GM10248 (cell line): ENCODE measurements at regions of chr5 and their contacts with region 1.

Region 1: DNA sequence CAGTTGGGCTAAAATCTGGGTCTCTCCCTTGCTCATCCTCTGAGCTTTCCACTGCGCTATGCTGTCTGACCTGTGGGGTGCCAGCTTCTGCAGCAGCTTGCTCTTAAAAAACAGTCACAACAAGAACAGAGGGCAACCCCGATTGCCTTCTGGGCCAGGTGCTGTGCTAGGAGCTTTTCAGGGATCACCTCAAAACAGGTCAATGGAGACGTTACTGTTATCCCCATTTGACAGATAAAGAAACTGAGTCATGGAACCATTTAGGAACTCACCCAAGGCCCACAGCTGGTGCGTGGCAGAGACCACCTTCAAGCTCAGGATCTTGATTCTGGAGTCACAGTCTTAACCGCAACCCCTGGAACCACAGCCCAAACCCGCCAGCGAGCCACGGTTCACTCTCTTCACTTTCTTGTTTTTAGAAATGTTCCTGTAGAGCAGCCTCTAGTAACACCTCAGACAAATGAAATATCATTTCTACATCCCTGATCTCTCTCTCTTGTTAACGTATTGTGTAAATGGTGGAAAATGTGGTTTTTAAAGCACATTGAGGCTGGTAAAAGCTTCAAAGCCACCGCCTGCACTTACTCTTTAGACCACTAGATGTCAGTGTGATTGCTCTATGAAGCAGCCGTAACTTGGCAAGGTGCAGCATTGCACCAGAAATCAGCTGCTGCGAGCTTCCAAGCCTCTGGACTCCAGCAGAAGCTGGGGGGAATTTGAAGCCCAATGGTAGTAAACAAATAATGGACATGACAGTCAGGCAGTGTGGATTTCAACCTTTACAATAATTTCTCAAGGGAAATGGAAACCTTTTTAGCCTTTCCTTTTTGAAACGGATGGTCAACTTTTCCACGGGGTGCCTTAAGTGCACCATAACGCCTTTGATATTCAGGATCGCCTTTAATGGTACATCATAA is 1.7 kb downstream of the FYB1 start:
- DNase-seq: peak; percentile 65
- CTCF ChIP-seq: peak; percentile 95

Region 2: DNA sequence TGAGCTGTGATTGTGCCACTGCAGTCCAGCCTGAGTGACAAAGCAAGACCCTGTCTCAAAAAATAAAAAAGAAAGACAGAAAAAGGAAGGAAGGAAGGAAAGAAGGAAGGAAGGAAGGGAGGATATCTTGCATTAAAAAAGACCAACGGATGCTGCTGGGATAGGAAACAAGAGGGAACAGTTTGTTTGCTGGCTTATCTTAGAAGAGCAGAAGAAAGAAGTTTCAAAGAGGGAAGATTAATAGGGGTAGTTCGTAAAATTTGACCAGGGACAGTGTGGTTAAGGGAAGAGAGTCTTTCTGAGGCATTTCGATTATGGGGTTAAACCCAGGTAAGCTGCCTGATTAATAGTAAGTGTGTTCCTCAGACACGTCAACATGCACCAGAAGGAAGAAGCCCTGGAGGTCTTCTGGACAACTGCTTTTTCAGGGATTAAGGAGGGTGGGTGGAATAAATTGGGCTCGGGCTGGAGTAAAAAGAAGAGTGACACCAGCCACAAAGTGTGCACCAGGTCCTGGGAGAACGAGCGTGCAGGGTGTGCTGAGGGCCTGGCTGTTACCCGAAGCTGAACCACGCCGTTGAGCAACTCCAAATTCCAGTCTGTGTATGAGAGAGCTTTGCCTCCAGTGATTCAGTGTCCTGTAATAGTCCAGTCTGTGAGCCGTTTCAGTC is 23.0 kb before region 1 on chr5:
- CTCF ChIA-PET with region 1: interaction called, 13 read pairs
- POLR2A ChIA-PET with region 1: no interaction called
- DNase-seq: no peak
- CTCF ChIP-seq: no peak

Region 3: GRCh38 chr5:39264528-39264927 is 46.9 kb after region 1 on chr5:
- CTCF ChIA-PET with region 1: interaction called, 19 read pairs
- POLR2A ChIA-PET with region 1: no interaction called
- DNase-seq: peak; percentile 35
- CTCF ChIP-seq: no peak

Region 4: GRCh38 chr5:39283231-39283818 is 65.7 kb after region 1 on chr5:
- CTCF ChIA-PET with region 1: interaction called, 106 read pairs
- POLR2A ChIA-PET with region 1: no interaction called
- DNase-seq: peak; percentile 50
- CTCF ChIP-seq: peak; percentile 65

Region 5: GRCh38 chr5:39547553-39548154 is 330.0 kb after region 1 on chr5:
- CTCF ChIA-PET with region 1: interaction called, 12 read pairs
- POLR2A ChIA-PET with region 1: no interaction called
- DNase-seq: peak; percentile 19
- CTCF ChIP-seq: peak; percentile 54